ENCODE measurements at regions of chr10 and their contacts with region 1.

Region 1: GRCh38 chr10:103888113-103888841 is 29.7 kb downstream of the STN1 start:
- DNase-seq: peak; percentile 95
- H3K4me3 Mint-ChIP-seq: peak overlapping the region; percentile 1
- H3K27ac Mint-ChIP-seq: peak overlapping the region; percentile 73
- H3K4me1 Mint-ChIP-seq: peaks cover 23% of the 10 kb centered on the region
- H3K27me3 Mint-ChIP-seq: no peaks in the 10 kb centered on the region
- CTCF ChIP-seq: peak; percentile 80

Region 2: GRCh38 chr10:103859161-103860086 is 28.9 kb before region 1 on chr10:
- CTCF ChIA-PET with region 1: interaction called, 23 read pairs
- POLR2A ChIA-PET with region 1: interaction called, 14 read pairs
- intact Hi-C with region 1: loop called (anchors 1 kb)
- DNase-seq: peak; percentile 77
- H3K4me3 Mint-ChIP-seq: no peak overlapping the region
- H3K27ac Mint-ChIP-seq: no peak overlapping the region
- H3K4me1 Mint-ChIP-seq: peaks cover 18% of the 10 kb centered on the region
- H3K27me3 Mint-ChIP-seq: no peaks in the 10 kb centered on the region
- CTCF ChIP-seq: peak; percentile 71

Region 3: GRCh38 chr10:103911021-103911459 is 22.8 kb after region 1 on chr10:
- CTCF ChIA-PET with region 1: interaction called, 10 read pairs
- POLR2A ChIA-PET with region 1: interaction called, 78 read pairs
- intact Hi-C with region 1: no loop called
- DNase-seq: no peak
- H3K4me3 Mint-ChIP-seq: peak overlapping the region; percentile 43
- H3K27ac Mint-ChIP-seq: peak overlapping the region; percentile 62
- H3K4me1 Mint-ChIP-seq: peaks cover 32% of the 10 kb centered on the region
- H3K27me3 Mint-ChIP-seq: no peaks in the 10 kb centered on the region
- CTCF ChIP-seq: no peak

Region 4: GRCh38 chr10:104002911-104003310 is 114.6 kb after region 1 on chr10:
- CTCF ChIA-PET with region 1: interaction called, 4 read pairs
- POLR2A ChIA-PET with region 1: interaction called, 10 read pairs
- intact Hi-C with region 1: no loop called
- DNase-seq: no peak
- H3K4me3 Mint-ChIP-seq: no peak overlapping the region
- H3K27ac Mint-ChIP-seq: no peak overlapping the region
- H3K4me1 Mint-ChIP-seq: peaks cover 6% of the 10 kb centered on the region
- H3K27me3 Mint-ChIP-seq: no peaks in the 10 kb centered on the region
- CTCF ChIP-seq: no peak

Region 5: GRCh38 chr10:104080762-104081161 is 192.5 kb after region 1 on chr10:
- CTCF ChIA-PET with region 1: interaction called, 4 read pairs
- POLR2A ChIA-PET with region 1: interaction called, 8 read pairs
- intact Hi-C with region 1: loop called (anchors 1 kb)
- DNase-seq: peak; percentile 65
- H3K4me3 Mint-ChIP-seq: peak overlapping the region; percentile 83
- H3K27ac Mint-ChIP-seq: no peak overlapping the region
- H3K4me1 Mint-ChIP-seq: peaks cover 24% of the 10 kb centered on the region
- H3K27me3 Mint-ChIP-seq: no peaks in the 10 kb centered on the region
- CTCF ChIP-seq: peak; percentile 45

Measured in MCF 10A (cell line).